HepG2 (cell line): ENCODE measurements at regions of chr10 and their contacts with region 1.

Region 1: GRCh38 chr10:33487014-33487776 is 152.7 kb upstream of the NRP1 start:
- DNase-seq: no peak
- ATAC-seq: peak; percentile 78
- H3K4me3 ChIP-seq: 0 out of 6 replicates have a peak overlapping the region, but pooled peaks of 1 of the 3 experiments have one; percentile 15
- H3K27ac ChIP-seq: no peak overlapping the region
- H3K4me1 ChIP-seq: peaks cover 17% of the 10 kb centered on the region
- H3K27me3 ChIP-seq: no peaks in the 10 kb centered on the region; a peak in 1 of 5 replicates
- CTCF ChIP-seq: peak; percentile 25; the same call in 1 of the 2 replicates
- EP300 ChIP-seq: no peak
- POLR2A ChIP-seq: no peak
- RAD21 ChIP-seq: no peak

Region 2: DNA sequence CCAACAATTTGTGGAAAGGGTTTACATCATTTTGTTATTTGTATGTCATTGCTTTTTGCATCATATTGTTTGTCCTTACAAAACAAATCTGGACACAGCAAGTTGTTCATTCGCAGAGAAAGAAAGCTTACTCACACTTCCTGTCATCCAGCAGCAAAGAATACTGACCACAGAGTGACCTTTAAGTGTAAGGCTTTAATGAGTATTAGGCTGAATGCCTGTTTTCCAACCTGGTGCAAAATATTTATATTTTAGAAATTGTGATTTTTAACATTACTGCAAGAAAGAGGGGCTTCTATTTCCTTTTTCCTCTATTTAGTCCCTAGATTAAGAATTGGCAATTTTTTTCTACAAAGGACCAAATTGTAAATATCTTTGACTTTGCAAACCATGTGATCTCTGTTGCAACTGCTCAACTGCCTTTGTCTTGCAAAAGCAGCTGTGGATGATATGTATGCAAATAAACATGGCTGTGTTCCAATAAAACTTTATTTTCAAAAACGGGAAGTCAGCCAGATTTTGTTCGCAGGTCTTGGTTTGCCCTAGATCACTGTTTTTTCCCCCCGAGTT is 501.3 kb before region 1 on chr10:
- CTCF ChIA-PET with region 1: no interaction called
- POLR2A ChIA-PET with region 1: no interaction called
- in situ Hi-C with region 1: no loop called
- intact Hi-C with region 1: no loop called
- DNase-seq: peak; percentile 76
- ATAC-seq: peak; percentile 17; the same call in 1 of the 3 replicates
- H3K4me3 ChIP-seq: peak overlapping the region in 2 of 3 experiments; percentile 22 to 34; a peak in 4 of 6 replicates
- H3K27ac ChIP-seq: peak overlapping the region; percentile 35
- H3K4me1 ChIP-seq: peaks cover 60% of the 10 kb centered on the region
- H3K27me3 ChIP-seq: no peaks in the 10 kb centered on the region; a peak in 1 of 5 replicates
- CTCF ChIP-seq: no peak
- EP300 ChIP-seq: no peak; a peak in 1 of 4 replicates
- POLR2A ChIP-seq: no peak
- RAD21 ChIP-seq: no peak

Region 3: GRCh38 chr10:33801748-33802147 is 314.6 kb after region 1 on chr10:
- CTCF ChIA-PET with region 1: no interaction called
- POLR2A ChIA-PET with region 1: interaction called, 3 read pairs
- in situ Hi-C with region 1: no loop called
- intact Hi-C with region 1: loop called (anchors 10 kb)
- DNase-seq: peak; percentile 85
- ATAC-seq: peak; percentile 92
- H3K4me3 ChIP-seq: no peak overlapping the region
- H3K27ac ChIP-seq: no peak overlapping the region
- H3K4me1 ChIP-seq: peaks cover 52% of the 10 kb centered on the region
- H3K27me3 ChIP-seq: no peaks in the 10 kb centered on the region
- CTCF ChIP-seq: no peak
- EP300 ChIP-seq: 0 out of 4 replicates have a peak, but pooled peaks of 1 of the 2 experiments have one; percentile 26
- POLR2A ChIP-seq: no peak
- RAD21 ChIP-seq: no peak